ENCODE measurements at regions of chr5 and their contacts with region 1.

Region 1: DNA sequence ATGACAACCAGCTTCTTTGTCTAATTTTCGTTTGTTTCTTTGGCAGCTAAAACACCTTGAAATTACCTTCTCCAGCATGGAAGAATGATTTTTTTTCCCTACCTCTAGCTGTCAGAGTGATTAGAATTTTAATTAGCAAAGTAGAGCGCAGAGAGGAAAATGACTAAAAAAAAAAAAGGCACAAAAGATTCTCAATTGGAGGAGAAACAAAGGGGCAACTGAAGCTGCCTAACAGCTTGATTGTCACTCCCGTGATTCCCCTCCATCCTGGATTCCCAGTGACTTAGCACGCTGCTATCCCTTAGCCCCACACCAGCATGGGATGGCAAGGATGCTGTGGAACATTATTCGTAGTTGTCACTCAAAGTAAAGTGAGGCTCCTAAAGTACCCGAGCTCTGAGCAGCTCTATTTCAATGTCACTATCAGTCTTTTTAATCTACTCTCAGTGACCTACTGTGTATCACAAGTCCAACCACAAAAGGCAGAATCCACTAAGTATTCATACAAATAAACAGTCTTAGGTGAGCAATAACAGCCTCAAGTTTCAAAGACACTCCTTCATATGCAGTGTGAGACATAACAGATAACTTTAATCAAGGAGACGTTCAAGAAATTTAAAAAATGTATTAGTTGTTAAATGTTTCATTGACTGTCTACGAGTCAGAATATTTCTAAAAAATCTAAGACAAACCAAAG is 710.0 kb upstream of the GRAMD2B start:
- DNase-seq: no peak
- H3K4me3 ChIP-seq: no peak overlapping the region
- H3K27ac ChIP-seq: no peak overlapping the region
- H3K27me3 ChIP-seq: no peaks in the 10 kb centered on the region
- CTCF ChIP-seq: no peak

Region 2: DNA sequence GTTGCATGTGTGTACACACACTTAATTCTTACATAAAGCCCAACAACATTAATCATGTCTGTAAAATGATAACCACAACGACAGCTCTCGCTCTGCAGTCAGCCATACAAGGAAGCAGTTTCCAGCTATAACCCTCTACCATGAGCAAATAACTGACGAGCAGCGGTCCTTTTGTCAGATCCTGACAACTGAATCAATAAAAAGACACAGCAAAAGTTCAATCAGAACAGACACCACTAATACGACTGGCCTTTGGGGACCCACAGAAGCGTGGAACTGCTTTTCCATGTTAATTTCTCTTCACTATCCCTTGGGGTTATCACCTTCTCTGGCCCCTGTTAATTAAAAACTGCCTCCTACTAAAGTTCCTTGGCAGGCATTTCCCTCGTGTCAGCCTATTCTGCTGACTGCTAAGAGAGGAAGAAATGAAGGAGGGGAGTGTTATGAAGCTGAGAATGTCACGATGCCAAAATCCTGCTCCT is 12.8 kb before region 1 on chr5:
- CTCF ChIA-PET with region 1: interaction called, 10 read pairs
- POLR2A ChIA-PET with region 1: no interaction called
- DNase-seq: no peak
- H3K4me3 ChIP-seq: no peak overlapping the region
- H3K27ac ChIP-seq: no peak overlapping the region
- H3K27me3 ChIP-seq: no peaks in the 10 kb centered on the region
- CTCF ChIP-seq: no peak

Measured in AG04450 (cell line).